CD8-positive, alpha-beta memory T cell (primary cell): ENCODE measurements at regions of chr11 and their contacts with region 1.

Region 1: DNA sequence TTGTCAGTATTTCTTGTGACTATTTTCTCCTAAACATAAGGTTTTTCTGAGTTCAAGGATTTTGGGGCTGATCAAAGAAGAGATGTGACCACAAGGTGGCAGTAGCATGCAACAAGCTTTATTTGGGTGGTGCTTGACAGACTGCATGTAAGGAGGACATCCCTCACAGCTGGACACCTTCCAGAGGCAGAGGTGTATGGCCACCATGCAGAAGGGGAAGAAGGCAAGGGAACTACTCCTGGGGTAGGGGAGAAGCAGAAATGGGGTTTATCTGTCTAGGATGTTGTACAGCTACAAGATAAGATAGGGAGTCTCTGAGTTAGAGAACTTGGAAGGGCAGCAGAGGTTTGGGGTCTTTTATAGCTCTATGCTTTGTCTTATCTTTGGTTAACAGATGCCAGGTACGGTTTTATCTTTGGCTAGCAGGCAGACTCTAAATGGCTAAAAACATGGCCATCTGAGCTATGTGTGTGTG is 5.1 kb upstream of the BIRC2 start:
- DNase-seq: peak; percentile 47 to 77 (median 64)
- H3K4me3 ChIP-seq: no peak overlapping the region
- H3K4me3 Mint-ChIP-seq: peak overlapping the region in 1 of 7 donors; percentile 13
- H3K27ac ChIP-seq: no peak overlapping the region
- H3K27ac Mint-ChIP-seq: peak overlapping the region; percentile 0 to 88 (median 66)
- H3K4me1 ChIP-seq: peaks cover 9% of the 10 kb centered on the region
- H3K4me1 Mint-ChIP-seq: peaks cover 16 to 31% (median 31%) of the 10 kb centered on the region in 3 donors
- H3K27me3 ChIP-seq: no peaks in the 10 kb centered on the region
- H3K27me3 Mint-ChIP-seq: peaks cover 0 to 3% of the 10 kb centered on the region in 2 donors

Region 2: GRCh38 chr11:102287964-102288724 is 53.7 kb before region 1 on chr11:
- CTCF ChIA-PET with region 1: interaction called, 84 read pairs
- POLR2A ChIA-PET with region 1: no interaction called
- DNase-seq: peak in 4 of 5 donors; percentile 17 to 66 (median 62)
- H3K4me3 ChIP-seq: no peak overlapping the region
- H3K4me3 Mint-ChIP-seq: peak overlapping the region in 1 of 7 donors; percentile 30
- H3K27ac ChIP-seq: no peak overlapping the region
- H3K27ac Mint-ChIP-seq: peak overlapping the region in 4 of 8 donors; percentile 22 to 56 (median 48)
- H3K4me1 ChIP-seq: peaks cover 4% of the 10 kb centered on the region
- H3K4me1 Mint-ChIP-seq: peaks cover 15 to 30% (median 18%) of the 10 kb centered on the region in 3 donors
- H3K27me3 ChIP-seq: no peaks in the 10 kb centered on the region
- H3K27me3 Mint-ChIP-seq: peaks cover 0 to 2% of the 10 kb centered on the region in 2 donors

Region 3: DNA sequence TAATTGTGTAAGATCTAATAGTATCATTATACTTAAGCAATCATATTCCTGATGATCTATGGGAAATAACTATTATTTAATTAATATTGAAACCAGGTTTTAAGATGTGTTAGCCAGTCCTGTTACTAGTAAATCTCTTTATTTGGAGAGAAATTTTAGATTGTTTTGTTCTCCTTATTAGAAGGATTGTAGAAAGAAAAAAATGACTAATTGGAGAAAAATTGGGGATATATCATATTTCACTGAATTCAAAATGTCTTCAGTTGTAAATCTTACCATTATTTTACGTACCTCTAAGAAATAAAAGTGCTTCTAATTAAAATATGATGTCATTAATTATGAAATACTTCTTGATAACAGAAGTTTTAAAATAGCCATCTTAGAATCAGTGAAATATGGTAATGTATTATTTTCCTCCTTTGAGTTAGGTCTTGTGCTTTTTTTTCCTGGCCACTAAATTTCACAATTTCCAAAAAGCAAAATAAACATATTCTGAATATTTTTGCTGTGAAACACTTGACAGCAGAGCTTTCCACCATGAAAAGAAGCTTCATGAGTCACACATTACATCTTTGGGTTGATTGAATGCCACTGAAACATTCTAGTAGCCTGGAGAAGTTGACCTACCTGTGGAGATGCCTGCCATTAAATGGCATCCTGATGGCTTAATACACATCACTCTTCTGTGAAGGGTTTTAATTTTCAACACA is 18.2 kb before region 1 on chr11:
- CTCF ChIA-PET with region 1: interaction called, 12 read pairs
- POLR2A ChIA-PET with region 1: no interaction called
- DNase-seq: no peak
- H3K4me3 ChIP-seq: no peak overlapping the region
- H3K4me3 Mint-ChIP-seq: peak overlapping the region in 2 of 7 donors; percentile 29 to 44
- H3K27ac ChIP-seq: no peak overlapping the region
- H3K27ac Mint-ChIP-seq: peak overlapping the region in 7 of 8 donors; percentile 40 to 93 (median 66)
- H3K4me1 ChIP-seq: peaks cover 45% of the 10 kb centered on the region
- H3K4me1 Mint-ChIP-seq: peaks cover 45 to 81% (median 73%) of the 10 kb centered on the region in 3 donors
- H3K27me3 ChIP-seq: no peaks in the 10 kb centered on the region
- H3K27me3 Mint-ChIP-seq: no peaks in the 10 kb centered on the region

Region 4: GRCh38 chr11:102367364-102367763 is 25.5 kb after region 1 on chr11:
- CTCF ChIA-PET with region 1: interaction called, 13 read pairs
- POLR2A ChIA-PET with region 1: no interaction called
- DNase-seq: peak in 2 of 5 donors; percentile 38 to 52
- H3K4me3 ChIP-seq: no peak overlapping the region
- H3K4me3 Mint-ChIP-seq: no peak overlapping the region
- H3K27ac ChIP-seq: no peak overlapping the region
- H3K27ac Mint-ChIP-seq: peak overlapping the region in 7 of 8 donors; percentile 31 to 79 (median 64)
- H3K4me1 ChIP-seq: peaks cover 17% of the 10 kb centered on the region
- H3K4me1 Mint-ChIP-seq: peaks cover 27 to 34% (median 30%) of the 10 kb centered on the region in 3 donors
- H3K27me3 ChIP-seq: no peaks in the 10 kb centered on the region
- H3K27me3 Mint-ChIP-seq: no peaks in the 10 kb centered on the region

Region 5: DNA sequence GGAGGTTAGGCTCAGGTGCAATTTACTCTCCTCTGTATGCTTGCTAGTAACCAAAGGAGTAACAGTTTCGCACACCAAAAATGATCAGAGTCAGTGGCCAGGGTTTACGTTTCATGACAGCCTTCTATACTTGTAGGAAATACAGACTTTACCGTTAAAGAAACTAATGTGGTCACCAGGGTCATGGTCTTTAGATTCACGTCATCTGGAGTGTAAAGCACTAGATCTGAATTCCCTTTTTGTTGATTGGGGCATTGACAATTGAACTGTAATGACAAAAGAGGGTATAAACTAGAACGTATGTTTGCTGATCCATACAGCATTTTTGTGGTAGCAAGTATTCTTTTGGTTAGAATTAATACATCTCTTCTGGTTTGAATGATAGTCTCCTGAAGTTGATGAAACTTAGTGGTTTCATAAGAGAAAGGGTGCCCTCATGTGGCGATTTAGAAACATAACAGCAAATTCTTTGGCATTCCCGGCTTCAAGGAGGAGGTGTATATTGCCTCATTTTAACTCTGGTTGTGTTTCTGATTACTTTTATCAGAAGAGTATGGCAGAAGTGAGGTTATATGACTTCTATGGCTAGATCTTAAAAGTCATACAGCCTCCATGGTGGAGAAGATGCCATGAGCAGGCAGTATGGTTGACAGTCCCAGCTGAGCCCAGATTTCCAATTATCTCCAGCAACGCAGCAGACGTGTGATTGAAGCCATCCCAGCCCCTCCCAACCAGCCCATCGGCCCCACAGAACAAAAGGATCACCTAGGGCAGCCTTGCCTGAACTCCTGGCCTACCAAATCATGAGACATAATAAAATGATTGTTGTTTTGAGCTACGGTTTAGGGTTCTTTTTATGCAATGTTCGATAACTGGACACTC is 153.5 kb after region 1 on chr11:
- CTCF ChIA-PET with region 1: interaction called, 25 read pairs
- POLR2A ChIA-PET with region 1: no interaction called
- DNase-seq: peak in 4 of 5 donors; percentile 8 to 74 (median 61)
- H3K4me3 ChIP-seq: no peak overlapping the region
- H3K4me3 Mint-ChIP-seq: peak overlapping the region in 1 of 7 donors; percentile 48
- H3K27ac ChIP-seq: no peak overlapping the region
- H3K27ac Mint-ChIP-seq: peak overlapping the region in 1 of 8 donors; percentile 23
- H3K4me1 ChIP-seq: peaks cover 5% of the 10 kb centered on the region
- H3K4me1 Mint-ChIP-seq: peaks cover 0 to 8% (median 6%) of the 10 kb centered on the region in 3 donors
- H3K27me3 ChIP-seq: no peaks in the 10 kb centered on the region
- H3K27me3 Mint-ChIP-seq: peaks cover 4 to 29% of the 10 kb centered on the region in 2 donors

Region 6: DNA sequence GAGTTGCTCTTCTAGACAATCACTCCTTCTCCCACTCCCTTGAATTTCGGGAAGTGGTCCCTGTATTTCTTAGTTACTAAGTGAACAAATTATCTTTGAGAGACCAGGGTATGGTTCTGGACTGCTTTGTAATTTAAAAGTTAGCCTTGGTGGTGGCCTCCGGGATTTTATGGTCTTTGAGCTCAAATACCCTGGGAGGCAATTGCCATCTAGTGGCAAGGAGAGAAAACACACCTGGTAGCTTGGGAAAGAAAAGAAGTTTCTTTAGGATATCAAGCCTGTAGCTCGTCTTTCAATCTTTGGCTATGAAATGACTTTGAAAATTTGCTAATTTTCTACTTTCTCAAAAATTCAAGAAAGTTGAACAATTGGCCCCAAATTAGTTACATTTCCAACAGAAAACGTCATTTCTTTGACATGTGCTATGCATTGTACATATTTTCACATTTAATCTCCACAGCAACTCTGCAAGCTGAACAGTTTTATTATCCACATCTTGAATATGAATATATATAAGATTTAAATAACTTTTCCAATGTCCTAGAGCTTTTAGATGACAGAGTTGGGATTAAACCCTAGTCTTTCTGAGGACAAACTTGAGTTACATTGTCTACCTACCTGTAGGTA is 324.6 kb after region 1 on chr11:
- CTCF ChIA-PET with region 1: interaction called, 13 read pairs
- POLR2A ChIA-PET with region 1: interaction called, 3 read pairs
- DNase-seq: peak in 2 of 5 donors; percentile 18 to 22
- H3K4me3 ChIP-seq: no peak overlapping the region
- H3K4me3 Mint-ChIP-seq: no peak overlapping the region
- H3K27ac ChIP-seq: no peak overlapping the region
- H3K27ac Mint-ChIP-seq: no peak overlapping the region
- H3K4me1 ChIP-seq: no peaks in the 10 kb centered on the region
- H3K4me1 Mint-ChIP-seq: peaks cover 0 to 8% (median 0%) of the 10 kb centered on the region in 3 donors
- H3K27me3 ChIP-seq: no peaks in the 10 kb centered on the region
- H3K27me3 Mint-ChIP-seq: peaks cover 8 to 16% of the 10 kb centered on the region in 2 donors